ENCODE measurements at regions of chr9 and their contacts with region 1.

Region 1: DNA sequence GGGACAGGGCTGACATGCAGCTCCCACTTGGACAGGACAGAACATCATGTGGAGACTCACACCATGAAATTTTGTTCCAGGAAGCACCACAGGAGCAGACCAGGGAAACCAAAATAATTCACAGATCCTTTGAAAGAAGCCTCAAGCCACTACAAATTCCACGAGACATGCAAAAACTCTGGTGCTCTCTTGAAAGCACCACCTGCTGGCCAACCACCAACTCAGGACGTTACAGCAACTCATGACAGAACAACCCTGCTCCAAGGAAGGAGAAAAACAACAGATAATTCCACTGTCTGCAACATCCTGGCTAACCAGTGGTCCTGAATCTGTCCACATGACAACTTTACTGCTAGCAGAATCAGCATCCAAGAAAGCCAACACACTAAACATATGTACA is 516.0 kb downstream of the SPATA31D1 start:
- DNase-seq: no peak
- ATAC-seq: no peak

Region 2: DNA sequence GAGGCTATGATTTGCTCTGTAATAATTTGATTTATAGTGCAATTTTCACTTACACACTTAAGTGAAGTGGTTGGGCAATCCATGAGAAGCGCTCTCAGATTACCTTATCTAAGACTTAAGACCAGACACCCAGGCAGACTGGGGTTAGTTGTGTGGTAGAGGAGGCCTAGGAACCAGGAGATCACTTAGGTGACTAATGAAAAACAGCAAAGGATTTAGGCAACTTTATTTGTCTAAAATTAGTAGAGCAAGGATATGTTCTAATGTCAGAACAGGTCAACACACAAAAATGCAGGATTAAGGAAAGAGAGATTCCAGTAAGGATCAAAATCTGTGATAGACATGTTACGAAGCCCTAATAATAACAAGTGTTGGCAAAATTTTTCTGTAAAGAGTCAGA is 1729.1 kb before region 1 on chr9:
- intact Hi-C with region 1: loop called in 1 of 2 experiments (anchors 10 kb)
- DNase-seq: no peak
- ATAC-seq: no peak

Region 3: DNA sequence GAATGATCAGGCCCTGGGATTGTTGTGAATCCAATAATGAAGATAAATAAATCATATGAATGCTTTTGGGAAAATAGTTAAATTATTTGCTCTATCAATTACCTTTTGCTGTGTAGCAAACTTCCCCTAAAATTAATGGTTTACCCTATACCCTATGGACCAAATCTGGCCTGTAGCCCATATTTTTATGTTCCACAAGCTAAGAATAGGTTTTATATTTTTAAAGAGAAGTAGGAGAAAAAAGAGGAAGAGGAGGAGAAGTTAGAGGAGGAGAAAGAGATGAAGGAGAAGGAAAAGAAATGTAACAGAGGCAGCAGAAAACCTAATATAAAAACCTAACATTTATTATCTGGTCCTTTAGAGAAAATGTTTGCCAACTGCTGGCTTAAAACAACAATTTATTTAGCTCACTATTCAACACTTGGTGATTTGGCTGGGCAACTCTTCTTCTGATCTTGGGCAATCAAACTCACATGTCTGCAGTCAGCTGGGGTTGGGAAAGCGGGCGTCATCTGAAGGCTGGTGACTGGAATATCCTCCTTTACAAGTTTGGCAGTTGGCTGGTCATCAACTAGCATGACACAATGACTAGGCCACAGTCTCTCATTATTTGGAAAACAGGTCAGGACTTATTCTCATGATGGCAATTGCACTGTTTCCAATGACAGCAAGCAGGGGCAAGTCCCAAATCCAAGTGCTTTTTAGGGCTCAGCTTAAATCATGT is 35.4 kb after region 1 on chr9:
- intact Hi-C with region 1: no loop called
- DNase-seq: peak; percentile 14
- ATAC-seq: no peak

Measured in left cardiac atrium (tissue), 4 donors.